ENCODE measurements at regions of chr1 and their contacts with region 1.

Region 1: GRCh38 chr1:171468120-171469035 is 17.0 kb upstream of the PRRC2C start:
- DNase-seq: peak; percentile 74
- H3K4me3 Mint-ChIP-seq: no peak overlapping the region
- H3K27ac Mint-ChIP-seq: peak overlapping the region; percentile 74
- H3K4me1 Mint-ChIP-seq: no peaks in the 10 kb centered on the region
- H3K27me3 Mint-ChIP-seq: no peaks in the 10 kb centered on the region
- CTCF ChIP-seq: no peak

Region 2: DNA sequence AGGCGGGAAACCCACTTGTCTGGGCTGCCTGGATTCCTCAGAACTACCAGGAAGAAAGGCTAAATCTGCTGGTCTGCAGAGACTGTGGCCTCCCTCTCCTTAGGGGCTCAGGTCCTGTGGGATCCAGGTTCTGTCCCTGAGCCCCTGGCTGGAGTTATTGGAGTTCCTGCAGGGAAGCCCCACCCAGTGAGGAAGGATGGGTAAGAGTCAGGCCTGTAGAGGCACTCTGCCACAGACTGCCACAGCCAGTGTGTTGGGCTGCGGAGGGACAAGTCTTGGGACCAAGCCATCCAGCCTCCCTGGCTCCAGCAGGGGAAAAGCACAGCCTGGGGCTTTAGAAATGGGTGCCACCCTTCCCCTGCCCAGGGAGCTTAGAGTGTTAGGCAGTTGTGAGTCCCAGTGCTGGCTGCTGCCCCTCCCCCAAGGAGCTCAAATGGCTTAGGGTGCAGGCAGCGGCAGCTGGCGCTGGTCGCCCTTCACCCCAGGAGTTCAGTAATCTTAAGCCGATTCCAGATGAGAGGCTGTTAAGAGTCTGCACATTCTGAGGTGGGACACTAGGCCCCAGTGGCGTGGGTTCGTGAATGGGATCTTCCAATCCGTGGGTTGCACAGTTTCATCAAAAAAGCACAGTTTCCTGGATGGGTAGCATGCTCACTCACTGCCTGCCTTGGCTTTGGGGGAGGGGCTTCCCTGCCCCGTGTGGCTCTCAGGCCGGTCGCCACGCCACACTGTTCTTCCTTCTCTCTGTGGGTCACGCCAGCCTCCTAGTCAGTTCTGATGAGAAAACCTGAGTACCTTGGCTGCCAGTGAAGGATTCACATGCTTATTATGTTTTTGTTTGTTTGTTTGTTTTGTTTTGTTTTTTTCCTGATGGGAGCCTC is 435.3 kb before region 1 on chr1:
- CTCF ChIA-PET with region 1: no interaction called
- POLR2A ChIA-PET with region 1: no interaction called
- intact Hi-C with region 1: no loop called
- DNase-seq: no peak
- H3K4me3 Mint-ChIP-seq: no peak overlapping the region
- H3K27ac Mint-ChIP-seq: no peak overlapping the region
- H3K4me1 Mint-ChIP-seq: no peaks in the 10 kb centered on the region
- H3K27me3 Mint-ChIP-seq: no peaks in the 10 kb centered on the region
- CTCF ChIP-seq: no peak

Region 3: DNA sequence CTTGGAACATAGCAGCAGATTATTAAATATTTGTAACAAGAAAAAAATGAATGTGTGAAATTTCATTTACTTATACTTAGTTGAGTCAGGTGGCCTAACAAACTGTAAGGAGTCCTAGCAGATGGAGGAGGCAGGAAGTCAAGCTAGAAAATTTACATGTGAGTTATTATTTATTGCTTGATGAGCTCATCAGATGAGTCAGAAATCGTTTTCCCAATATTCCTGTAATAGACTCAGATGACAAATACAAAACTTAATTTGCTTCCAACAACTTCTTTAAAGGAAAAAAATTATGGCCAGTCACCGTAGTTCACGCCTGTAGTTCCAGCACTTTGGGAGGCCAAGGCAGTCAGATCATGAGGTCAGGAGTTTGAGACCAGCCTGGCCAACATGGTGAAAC is 27.1 kb before region 1 on chr1:
- CTCF ChIA-PET with region 1: no interaction called
- POLR2A ChIA-PET with region 1: interaction called, 4 read pairs
- intact Hi-C with region 1: loop called (anchors 2 kb)
- DNase-seq: peak; percentile 91
- H3K4me3 Mint-ChIP-seq: no peak overlapping the region
- H3K27ac Mint-ChIP-seq: peak overlapping the region; percentile 93
- H3K4me1 Mint-ChIP-seq: peaks cover 12% of the 10 kb centered on the region
- H3K27me3 Mint-ChIP-seq: no peaks in the 10 kb centered on the region
- CTCF ChIP-seq: no peak

Measured in MCF 10A (cell line).